CD4-positive, alpha-beta memory T cell (primary cell): ENCODE measurements at regions of chr3 and their contacts with region 1.

Region 1: DNA sequence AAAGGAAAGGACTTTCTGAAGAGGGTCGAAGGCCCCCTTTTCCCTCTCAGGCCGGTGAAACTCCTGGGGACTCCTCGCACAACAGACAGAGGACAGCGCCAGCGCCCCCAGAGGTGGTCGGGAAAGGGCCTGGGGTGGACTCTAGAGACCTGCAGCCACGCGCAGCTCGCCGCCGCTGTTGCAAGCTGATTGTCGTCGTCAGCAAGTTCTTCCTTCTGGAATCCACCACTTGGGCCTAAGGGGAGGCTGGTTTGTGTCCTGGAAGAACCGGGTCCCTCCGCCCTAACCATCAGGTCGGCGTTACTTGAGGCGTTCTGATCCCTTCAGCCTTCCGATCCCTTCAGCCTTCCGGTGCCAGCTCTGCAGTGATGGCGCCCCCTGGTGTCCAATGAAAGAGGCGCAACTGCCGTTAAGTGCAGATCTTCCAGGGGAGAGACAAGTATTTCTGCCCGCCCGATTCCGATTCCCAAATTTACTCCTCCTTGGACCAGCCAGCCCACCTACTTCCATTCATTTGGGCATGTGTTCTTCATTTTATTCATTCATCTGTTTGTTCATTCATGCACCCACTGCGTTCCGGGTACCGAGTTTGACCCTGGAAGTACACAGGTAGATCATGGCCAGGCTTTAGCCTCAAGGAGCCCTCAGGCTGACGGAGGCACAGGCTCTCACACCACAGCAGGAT is 77.2 kb upstream of the SLC6A11 start:
- DNase-seq: peak; percentile 54 to 64 (median 59)
- H3K4me3 ChIP-seq: no peak overlapping the region
- H3K4me3 Mint-ChIP-seq: peak overlapping the region in 7 of 8 donors; percentile 7 to 77 (median 51)
- H3K27ac ChIP-seq: no peak overlapping the region
- H3K27ac Mint-ChIP-seq: peak overlapping the region in 1 of 7 donors; percentile 63
- H3K4me1 ChIP-seq: peaks cover 5% of the 10 kb centered on the region
- H3K4me1 Mint-ChIP-seq: peaks cover 5 to 14% (median 9%) of the 10 kb centered on the region in 4 donors
- H3K27me3 ChIP-seq: peaks cover 16% of the 10 kb centered on the region
- H3K27me3 Mint-ChIP-seq: peaks cover 41 to 55% of the 10 kb centered on the region in 2 donors

Region 2: GRCh38 chr3:8970971-8971589 is 1767.8 kb before region 1 on chr3:
- CTCF ChIA-PET with region 1: no interaction called
- POLR2A ChIA-PET with region 1: no interaction called
- intact Hi-C with region 1: loop called (anchors 2 kb)
- DNase-seq: peak; percentile 68 to 78 (median 73)
- H3K4me3 ChIP-seq: no peak overlapping the region
- H3K4me3 Mint-ChIP-seq: peak overlapping the region in 3 of 8 donors; percentile 40 to 58 (median 41)
- H3K27ac ChIP-seq: no peak overlapping the region
- H3K27ac Mint-ChIP-seq: no peak overlapping the region
- H3K4me1 ChIP-seq: no peaks in the 10 kb centered on the region
- H3K4me1 Mint-ChIP-seq: peaks cover 2 to 5% (median 4%) of the 10 kb centered on the region in 4 donors
- H3K27me3 ChIP-seq: no peaks in the 10 kb centered on the region
- H3K27me3 Mint-ChIP-seq: peaks cover 8 to 12% of the 10 kb centered on the region in 2 donors

Region 3: GRCh38 chr3:9715764-9716437 is 1022.9 kb before region 1 on chr3:
- CTCF ChIA-PET with region 1: no interaction called
- POLR2A ChIA-PET with region 1: no interaction called
- intact Hi-C with region 1: loop called (anchors 5 kb)
- DNase-seq: peak in 2 of 5 donors; percentile 20 to 47
- H3K4me3 ChIP-seq: no peak overlapping the region
- H3K4me3 Mint-ChIP-seq: no peak overlapping the region
- H3K27ac ChIP-seq: no peak overlapping the region
- H3K27ac Mint-ChIP-seq: peak overlapping the region in 2 of 7 donors; percentile 29 to 60
- H3K4me1 ChIP-seq: peaks cover 8% of the 10 kb centered on the region
- H3K4me1 Mint-ChIP-seq: peaks cover 9 to 15% (median 12%) of the 10 kb centered on the region in 4 donors
- H3K27me3 ChIP-seq: no peaks in the 10 kb centered on the region
- H3K27me3 Mint-ChIP-seq: peaks cover 1 to 5% of the 10 kb centered on the region in 2 donors

Region 4: GRCh38 chr3:9779721-9780457 is 958.9 kb before region 1 on chr3:
- CTCF ChIA-PET with region 1: no interaction called
- POLR2A ChIA-PET with region 1: no interaction called
- intact Hi-C with region 1: loop called (anchors 5 kb)
- DNase-seq: peak in 4 of 5 donors; percentile 19 to 50 (median 36)
- H3K4me3 ChIP-seq: peak overlapping the region in 1 of 2 donors; percentile 2
- H3K4me3 Mint-ChIP-seq: peak overlapping the region in 7 of 8 donors; percentile 39 to 77 (median 69)
- H3K27ac ChIP-seq: peak overlapping the region; percentile 50
- H3K27ac Mint-ChIP-seq: peak overlapping the region; percentile 73 to 90 (median 89)
- H3K4me1 ChIP-seq: peaks cover 45% of the 10 kb centered on the region
- H3K4me1 Mint-ChIP-seq: peaks cover 40 to 57% (median 48%) of the 10 kb centered on the region in 4 donors
- H3K27me3 ChIP-seq: no peaks in the 10 kb centered on the region
- H3K27me3 Mint-ChIP-seq: no peaks in the 10 kb centered on the region

Region 5: GRCh38 chr3:10180738-10181295 is 558.0 kb before region 1 on chr3:
- CTCF ChIA-PET with region 1: no interaction called
- POLR2A ChIA-PET with region 1: no interaction called
- intact Hi-C with region 1: no loop called
- DNase-seq: no peak
- H3K4me3 ChIP-seq: no peak overlapping the region
- H3K4me3 Mint-ChIP-seq: no peak overlapping the region
- H3K27ac ChIP-seq: no peak overlapping the region
- H3K27ac Mint-ChIP-seq: peak overlapping the region in 2 of 7 donors; percentile 51 to 65
- H3K4me1 ChIP-seq: peaks cover 8% of the 10 kb centered on the region
- H3K4me1 Mint-ChIP-seq: peaks cover 4 to 23% (median 12%) of the 10 kb centered on the region in 4 donors
- H3K27me3 ChIP-seq: no peaks in the 10 kb centered on the region
- H3K27me3 Mint-ChIP-seq: no peaks in the 10 kb centered on the region

Region 6: GRCh38 chr3:10337323-10338163 is 401.3 kb before region 1 on chr3:
- CTCF ChIA-PET with region 1: interaction called, 61 read pairs
- POLR2A ChIA-PET with region 1: no interaction called
- intact Hi-C with region 1: no loop called
- DNase-seq: no peak
- H3K4me3 ChIP-seq: no peak overlapping the region
- H3K4me3 Mint-ChIP-seq: no peak overlapping the region
- H3K27ac ChIP-seq: no peak overlapping the region
- H3K27ac Mint-ChIP-seq: no peak overlapping the region
- H3K4me1 ChIP-seq: no peaks in the 10 kb centered on the region
- H3K4me1 Mint-ChIP-seq: peaks cover 3 to 5% (median 4%) of the 10 kb centered on the region in 4 donors
- H3K27me3 ChIP-seq: no peaks in the 10 kb centered on the region
- H3K27me3 Mint-ChIP-seq: peaks cover 0 to 1% of the 10 kb centered on the region in 2 donors

Region 7: GRCh38 chr3:10344147-10344943 is 394.5 kb before region 1 on chr3:
- CTCF ChIA-PET with region 1: interaction called, 61 read pairs
- POLR2A ChIA-PET with region 1: no interaction called
- intact Hi-C with region 1: no loop called
- DNase-seq: peak in 4 of 5 donors; percentile 41 to 50 (median 46)
- H3K4me3 ChIP-seq: no peak overlapping the region
- H3K4me3 Mint-ChIP-seq: no peak overlapping the region
- H3K27ac ChIP-seq: no peak overlapping the region
- H3K27ac Mint-ChIP-seq: no peak overlapping the region
- H3K4me1 ChIP-seq: no peaks in the 10 kb centered on the region
- H3K4me1 Mint-ChIP-seq: no peaks in the 10 kb centered on the region
- H3K27me3 ChIP-seq: no peaks in the 10 kb centered on the region
- H3K27me3 Mint-ChIP-seq: peaks cover 0 to 3% of the 10 kb centered on the region in 2 donors

Region 8: GRCh38 chr3:10417849-10418248 is 321.0 kb before region 1 on chr3:
- CTCF ChIA-PET with region 1: interaction called, 17 read pairs
- POLR2A ChIA-PET with region 1: interaction called, 3 read pairs
- intact Hi-C with region 1: loop called (anchors 1 kb)
- DNase-seq: peak in 1 of 5 donors; percentile 8
- H3K4me3 ChIP-seq: no peak overlapping the region
- H3K4me3 Mint-ChIP-seq: no peak overlapping the region
- H3K27ac ChIP-seq: no peak overlapping the region
- H3K27ac Mint-ChIP-seq: peak overlapping the region in 1 of 7 donors; percentile 10
- H3K4me1 ChIP-seq: peaks cover 14% of the 10 kb centered on the region
- H3K4me1 Mint-ChIP-seq: peaks cover 4 to 10% (median 6%) of the 10 kb centered on the region in 4 donors
- H3K27me3 ChIP-seq: no peaks in the 10 kb centered on the region
- H3K27me3 Mint-ChIP-seq: peaks cover 1 to 4% of the 10 kb centered on the region in 2 donors